AG04450 (cell line): ENCODE measurements at regions of chr2 and their contacts with region 1.

Region 1: DNA sequence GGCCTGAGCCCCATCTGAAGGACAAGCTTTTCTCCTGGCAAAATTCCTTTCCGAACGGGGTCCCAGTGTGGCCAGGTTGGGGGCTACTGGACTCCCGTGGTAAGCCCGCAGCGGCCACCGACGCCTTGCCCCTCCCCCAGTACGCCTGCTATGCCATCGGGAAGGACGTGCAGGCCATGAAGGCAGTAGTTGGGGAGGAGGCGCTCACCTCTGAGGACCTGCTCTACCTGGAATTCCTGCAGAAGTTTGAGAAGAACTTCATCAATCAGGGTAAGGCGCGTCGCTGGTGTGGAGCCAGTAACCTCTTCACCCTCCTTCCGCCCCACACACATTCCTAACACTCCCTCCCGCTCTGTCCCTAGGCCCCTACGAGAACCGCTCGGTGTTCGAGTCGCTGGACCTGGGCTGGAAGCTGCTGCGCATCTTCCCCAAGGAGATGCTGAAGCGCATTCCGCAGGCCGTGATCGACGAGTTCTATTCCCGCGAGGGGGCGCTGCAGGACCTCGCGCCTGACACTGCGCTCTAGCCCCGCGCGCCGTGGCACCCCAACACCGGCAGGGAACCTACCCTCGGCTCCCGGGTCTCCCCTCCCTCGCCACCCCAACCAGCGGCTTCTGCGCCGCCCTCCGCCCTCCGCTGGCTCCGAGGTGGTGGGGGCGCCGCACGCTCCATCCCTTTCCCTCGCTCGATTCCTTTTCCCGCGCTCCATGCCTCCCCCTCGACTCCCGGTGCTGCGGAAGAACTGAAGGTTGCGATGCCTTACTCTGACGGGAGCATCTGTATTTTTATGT is 13.6 kb upstream of the ANKRD53 start:
- DNase-seq: peak; percentile 29
- H3K4me3 ChIP-seq: peak overlapping the region; percentile 60
- H3K27ac ChIP-seq: no peak overlapping the region
- H3K27me3 ChIP-seq: peaks cover 9% of the 10 kb centered on the region
- CTCF ChIP-seq: peak; percentile 78

Region 2: DNA sequence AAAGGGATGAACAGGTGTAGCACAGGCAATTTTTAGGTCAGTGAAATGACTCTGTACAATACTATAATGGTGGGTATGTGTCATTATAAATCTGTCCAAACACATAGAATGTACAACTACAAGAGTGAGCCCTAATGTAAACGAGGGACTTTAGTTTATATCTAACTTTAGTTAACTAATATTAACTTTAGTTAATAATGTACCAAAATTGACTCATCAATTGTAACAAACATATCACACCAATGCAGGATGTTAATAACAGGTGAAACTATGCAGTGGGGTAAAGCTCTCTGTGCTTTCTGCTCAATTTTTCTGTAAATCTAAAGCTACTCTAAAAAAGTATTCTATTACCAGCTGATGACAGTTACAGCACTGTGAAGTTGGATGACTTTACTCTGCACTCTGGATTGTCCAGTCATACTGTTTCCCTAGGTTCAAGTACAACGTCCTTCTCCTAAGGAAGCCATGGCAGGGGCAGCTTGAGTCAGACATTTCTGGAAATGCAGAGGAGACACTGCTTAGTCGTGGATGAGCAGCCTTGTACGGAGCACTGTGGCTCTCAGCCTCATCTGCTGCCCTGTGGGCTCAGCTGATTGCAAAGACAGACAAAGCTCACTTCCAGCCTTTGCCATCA is 437.2 kb before region 1 on chr2:
- CTCF ChIA-PET with region 1: no interaction called
- POLR2A ChIA-PET with region 1: no interaction called
- DNase-seq: no peak
- H3K4me3 ChIP-seq: no peak overlapping the region
- H3K27ac ChIP-seq: no peak overlapping the region
- H3K27me3 ChIP-seq: no peaks in the 10 kb centered on the region
- CTCF ChIP-seq: no peak

Region 3: DNA sequence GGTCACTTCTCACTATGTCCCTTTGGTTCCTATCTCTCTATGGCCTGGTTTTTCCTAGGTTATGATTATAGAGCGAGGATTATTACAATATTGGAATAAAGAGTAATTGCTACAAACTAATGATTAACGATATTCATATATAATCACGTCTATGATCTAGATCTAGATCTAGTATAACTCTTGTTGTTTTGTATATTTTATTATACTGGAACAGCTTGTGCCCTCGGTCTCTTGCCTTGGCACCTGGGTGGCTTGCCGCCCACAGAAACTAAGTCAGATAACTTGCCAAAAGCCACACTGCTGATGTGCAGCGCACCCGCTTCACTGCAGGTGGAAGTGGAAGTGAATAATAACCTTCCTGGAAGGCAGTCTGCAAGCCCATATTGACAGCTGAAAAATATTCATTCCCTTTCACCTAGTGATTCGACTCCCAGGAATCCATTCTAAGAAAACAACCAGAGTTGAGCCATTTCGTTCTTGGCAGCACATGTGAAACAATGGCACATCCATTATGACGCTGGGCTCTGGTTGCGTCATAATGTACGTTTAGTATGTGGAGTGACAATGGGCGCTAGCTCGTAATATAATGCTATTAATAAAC is 12.9 kb after region 1 on chr2:
- CTCF ChIA-PET with region 1: interaction called, 25 read pairs
- POLR2A ChIA-PET with region 1: no interaction called
- DNase-seq: peak; percentile 55
- H3K4me3 ChIP-seq: peak overlapping the region; percentile 64
- H3K27ac ChIP-seq: peak overlapping the region; percentile 91
- H3K27me3 ChIP-seq: no peaks in the 10 kb centered on the region
- CTCF ChIP-seq: no peak; the same call in 1 of the 2 replicates

Region 4: GRCh38 chr2:70984576-70985282 is 19.9 kb after region 1 on chr2:
- CTCF ChIA-PET with region 1: interaction called, 16 read pairs
- POLR2A ChIA-PET with region 1: interaction called, 11 read pairs
- DNase-seq: no peak
- H3K4me3 ChIP-seq: no peak overlapping the region
- H3K27ac ChIP-seq: no peak overlapping the region
- H3K27me3 ChIP-seq: no peaks in the 10 kb centered on the region
- CTCF ChIP-seq: peak; percentile 68